Mammary epithelial cell (primary cell): ENCODE measurements at regions of chr1 and their contacts with region 1.

Region 1: DNA sequence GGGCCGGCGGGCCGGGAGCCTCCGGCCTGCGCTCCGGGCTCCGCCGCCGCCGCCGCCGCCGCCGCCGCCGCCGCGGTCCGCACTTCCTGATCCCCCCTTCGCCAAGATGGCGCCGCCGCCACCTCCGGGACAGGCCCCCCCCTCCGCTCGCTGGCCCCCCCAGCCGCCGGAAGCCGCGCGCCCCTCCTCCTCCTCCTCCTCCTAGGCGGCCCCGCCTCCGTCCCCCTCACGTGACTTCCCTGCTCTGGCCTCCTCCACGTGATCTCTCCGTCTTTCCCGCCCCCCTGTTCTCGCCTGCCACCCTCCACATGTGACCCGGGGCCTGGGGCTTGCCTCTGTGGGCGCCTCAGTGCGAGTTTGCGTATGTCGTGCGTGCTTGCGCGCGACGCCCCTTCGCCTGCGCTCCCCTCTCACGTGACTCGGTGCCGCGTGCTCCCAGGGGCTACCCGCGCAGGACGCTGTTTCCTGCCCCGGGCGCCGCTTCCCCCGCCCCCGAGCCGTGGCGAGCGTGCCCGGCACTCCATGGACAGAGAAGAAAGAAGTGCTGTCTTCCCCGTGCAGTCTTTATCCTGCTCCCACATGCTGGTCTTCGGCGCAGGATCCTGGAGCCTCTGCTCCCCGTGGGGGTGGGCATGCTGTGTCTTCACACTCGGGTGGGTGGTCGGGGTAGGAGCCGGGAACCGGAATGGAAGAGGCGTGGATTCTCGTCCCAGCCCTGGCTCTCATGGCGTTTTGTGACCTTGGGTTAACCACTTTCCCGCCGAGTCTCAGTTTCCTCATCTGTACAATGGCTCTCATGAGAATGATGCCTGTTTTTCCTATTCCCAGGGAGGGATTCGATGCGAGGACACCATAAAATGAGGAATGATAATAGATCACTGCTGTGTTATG is at the start of gene UBE2Q1:
- DNase-seq: peak; percentile 97
- H3K4me3 ChIP-seq: peak within 1 kb of the TSS; percentile 54 to 74 (median 68)
- H3K27ac ChIP-seq: peak within 1 kb of the TSS; percentile 70
- H3K4me1 ChIP-seq: peaks cover 18% of the 10 kb centered on the region
- H3K27me3 ChIP-seq: no peaks in the 10 kb centered on the region
- CTCF ChIP-seq: no peak
- total RNA-seq, gene UBE2Q1: 31.2 to 80.1 TPM

Region 2: DNA sequence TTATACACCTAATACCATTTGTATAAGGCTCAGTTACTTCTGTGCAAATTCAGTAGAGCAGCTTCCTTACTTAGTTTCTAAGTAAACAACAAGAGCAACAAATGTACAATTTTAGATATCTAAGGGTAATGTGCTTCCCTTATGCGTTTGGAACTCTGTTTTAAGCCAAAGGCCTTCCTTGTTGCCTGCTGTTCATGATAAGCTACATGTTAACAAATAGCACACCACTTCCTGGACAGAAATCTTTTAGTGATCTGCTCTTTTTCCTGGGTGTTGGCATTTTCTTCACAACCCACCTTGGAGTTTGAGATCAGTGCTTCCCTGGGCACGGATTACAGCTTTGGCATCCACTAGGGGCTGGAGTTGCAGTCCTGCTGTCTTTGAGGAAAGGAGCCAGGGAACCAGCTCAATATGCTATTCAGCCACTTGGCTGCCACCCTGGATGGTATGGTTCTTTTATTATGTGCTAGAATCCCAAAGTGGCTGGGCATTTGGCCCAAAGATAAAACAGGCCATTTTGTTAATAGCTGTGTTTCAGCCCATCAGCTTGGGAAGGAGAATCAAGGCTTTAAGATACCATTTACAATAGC is 104.7 kb after region 1 on chr1:
- CTCF ChIA-PET with region 1: interaction called, 3 read pairs
- dilution Hi-C with region 1: no loop called
- in situ Hi-C with region 1: no loop called
- intact Hi-C with region 1: loop called (anchors 1 kb)
- DNase-seq: no peak
- H3K4me3 ChIP-seq: no peak overlapping the region
- H3K27ac ChIP-seq: no peak overlapping the region
- H3K4me1 ChIP-seq: no peaks in the 10 kb centered on the region
- H3K27me3 ChIP-seq: peaks cover 3% of the 10 kb centered on the region
- CTCF ChIP-seq: no peak

Region 3: GRCh38 chr1:154747740-154748404 is 189.1 kb after region 1 on chr1:
- CTCF ChIA-PET with region 1: no interaction called
- dilution Hi-C with region 1: no loop called
- in situ Hi-C with region 1: no loop called
- intact Hi-C with region 1: loop called (anchors 1 kb)
- DNase-seq: no peak
- H3K4me3 ChIP-seq: no peak overlapping the region
- H3K27ac ChIP-seq: no peak overlapping the region
- H3K4me1 ChIP-seq: no peaks in the 10 kb centered on the region
- H3K27me3 ChIP-seq: no peaks in the 10 kb centered on the region
- CTCF ChIP-seq: no peak

Region 4: DNA sequence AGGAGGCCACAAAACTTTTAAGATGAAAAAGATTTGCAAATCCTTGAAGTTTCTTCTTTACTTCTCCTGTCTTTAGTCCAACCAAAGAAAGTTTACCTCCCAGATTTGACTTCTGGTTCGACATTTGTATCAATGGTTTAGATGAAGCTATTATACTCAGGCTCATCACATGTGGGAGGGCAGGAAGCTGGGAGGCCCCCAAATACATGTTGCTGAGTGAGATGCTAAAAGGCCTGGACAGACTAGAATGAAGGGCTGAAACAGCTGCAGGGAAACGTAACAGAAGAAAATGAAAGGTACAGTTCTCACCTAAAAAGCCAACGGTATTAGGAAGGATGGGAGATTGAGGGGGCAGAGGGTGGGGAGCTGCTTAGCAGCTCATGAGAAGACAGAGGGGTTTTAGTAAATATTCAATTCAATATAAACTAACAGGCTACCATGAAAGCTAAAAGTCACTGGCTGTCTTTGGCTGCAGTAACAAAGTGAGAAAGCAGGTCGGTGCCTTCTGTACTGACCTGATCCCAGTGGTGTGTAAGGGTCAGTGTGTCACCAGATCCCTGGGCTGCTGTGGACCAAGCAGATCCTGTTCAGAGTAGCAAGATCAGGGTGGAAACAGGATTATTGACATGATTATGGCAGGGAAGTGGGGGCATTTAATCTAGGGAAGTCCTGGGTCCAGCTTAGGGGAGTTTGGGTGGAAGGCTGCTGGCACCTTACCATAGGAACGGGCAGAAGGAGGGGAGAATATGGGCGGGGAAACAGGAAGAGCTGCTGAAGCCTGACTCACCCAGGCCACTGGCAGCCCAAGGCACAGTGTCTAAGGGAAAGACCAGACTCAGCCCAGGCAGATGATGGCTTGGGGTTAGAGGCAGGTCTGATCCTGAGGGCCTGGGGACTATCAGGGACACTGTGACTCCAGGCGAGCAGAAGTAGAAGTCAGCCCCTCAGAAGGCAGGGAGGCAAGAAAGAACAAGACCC is 250.9 kb after region 1 on chr1:
- CTCF ChIA-PET with region 1: interaction called, 9 read pairs
- dilution Hi-C with region 1: no loop called
- in situ Hi-C with region 1: no loop called
- intact Hi-C with region 1: loop called (anchors 5 kb)
- DNase-seq: peak; percentile 60
- H3K4me3 ChIP-seq: no peak overlapping the region
- H3K27ac ChIP-seq: no peak overlapping the region
- H3K4me1 ChIP-seq: peaks cover 25% of the 10 kb centered on the region
- H3K27me3 ChIP-seq: no peaks in the 10 kb centered on the region
- CTCF ChIP-seq: no peak

Region 5: GRCh38 chr1:154936555-154937084 is 377.8 kb after region 1 on chr1 and contains the start of gene PMVK:
- CTCF ChIA-PET with region 1: no interaction called
- dilution Hi-C with region 1: no loop called
- in situ Hi-C with region 1: no loop called
- intact Hi-C with region 1: loop called (anchors 1 kb)
- DNase-seq: peak; percentile 95
- H3K4me3 ChIP-seq: peak within 1 kb of the TSS; percentile 57 to 81 (median 71)
- H3K27ac ChIP-seq: peak within 1 kb of the TSS; percentile 96
- H3K4me1 ChIP-seq: peaks cover 38% of the 10 kb centered on the region
- H3K27me3 ChIP-seq: no peaks in the 10 kb centered on the region
- CTCF ChIP-seq: peak in 1 of 2 donors; percentile 50
- total RNA-seq, gene PMVK: 7.2 to 34.7 TPM

Region 6: GRCh38 chr1:155084722-155085503 is 526.1 kb after region 1 on chr1:
- CTCF ChIA-PET with region 1: no interaction called
- dilution Hi-C with region 1: no loop called
- in situ Hi-C with region 1: no loop called
- intact Hi-C with region 1: loop called (anchors 1 kb)
- DNase-seq: peak; percentile 90
- H3K4me3 ChIP-seq: peak overlapping the region; percentile 71 to 86 (median 73)
- H3K27ac ChIP-seq: peak overlapping the region; percentile 70
- H3K4me1 ChIP-seq: peaks cover 46% of the 10 kb centered on the region
- H3K27me3 ChIP-seq: peaks cover 20% of the 10 kb centered on the region
- CTCF ChIP-seq: peak; percentile 75 to 89

Region 7: GRCh38 chr1:155105604-155106022 is 546.8 kb after region 1 on chr1:
- CTCF ChIA-PET with region 1: no interaction called
- dilution Hi-C with region 1: no loop called
- in situ Hi-C with region 1: no loop called
- intact Hi-C with region 1: no loop called
- DNase-seq: no peak
- H3K4me3 ChIP-seq: no peak overlapping the region
- H3K27ac ChIP-seq: no peak overlapping the region
- H3K4me1 ChIP-seq: no peaks in the 10 kb centered on the region
- H3K27me3 ChIP-seq: no peaks in the 10 kb centered on the region
- CTCF ChIP-seq: no peak